PC-3 (cell line): ENCODE measurements at regions of chr4 and their contacts with region 1.

Region 1: DNA sequence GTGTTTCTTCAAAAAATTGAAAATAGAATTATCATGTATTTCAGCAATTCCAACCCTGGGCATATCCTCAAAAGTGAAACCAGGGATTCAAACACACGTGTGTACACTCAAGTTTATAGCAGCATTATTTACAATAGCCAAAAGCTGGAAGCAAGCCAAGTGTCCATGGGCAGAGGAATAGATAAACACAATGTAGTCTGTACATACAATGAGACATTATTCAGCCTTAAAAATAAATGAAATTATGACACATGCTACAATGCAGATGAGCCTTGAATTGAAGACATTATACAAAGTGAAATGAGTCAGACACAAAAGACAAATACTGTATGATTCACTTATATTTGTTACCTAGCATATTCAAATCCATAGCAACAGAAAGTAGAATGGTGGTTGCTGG is 853.4 kb downstream of the STIM2 start:
- DNase-seq: peak; percentile 88
- ATAC-seq: peak; percentile 98
- H3K4me3 ChIP-seq: no peak overlapping the region
- H3K27ac ChIP-seq: peak overlapping the region; percentile 73
- H3K4me1 ChIP-seq: peaks cover 8% of the 10 kb centered on the region
- H3K27me3 ChIP-seq: no peaks in the 10 kb centered on the region
- CTCF ChIP-seq: no peak

Region 2: GRCh38 chr4:27604692-27605091 is 109.4 kb before region 1 on chr4:
- CTCF ChIA-PET with region 1: no interaction called
- POLR2A ChIA-PET with region 1: no interaction called
- intact Hi-C with region 1: no loop called
- DNase-seq: no peak
- ATAC-seq: no peak
- H3K4me3 ChIP-seq: no peak overlapping the region
- H3K27ac ChIP-seq: no peak overlapping the region
- H3K4me1 ChIP-seq: no peaks in the 10 kb centered on the region
- H3K27me3 ChIP-seq: no peaks in the 10 kb centered on the region
- CTCF ChIP-seq: no peak

Region 3: GRCh38 chr4:27791640-27792039 is 77.6 kb after region 1 on chr4:
- CTCF ChIA-PET with region 1: no interaction called
- POLR2A ChIA-PET with region 1: no interaction called
- intact Hi-C with region 1: loop called (anchors 2 kb)
- DNase-seq: peak; percentile 80
- ATAC-seq: peak; percentile 80
- H3K4me3 ChIP-seq: no peak overlapping the region; the same call in 1 of the 2 replicates
- H3K27ac ChIP-seq: peak overlapping the region; percentile 69; the same call in 1 of the 2 replicates
- H3K4me1 ChIP-seq: peaks cover 51% of the 10 kb centered on the region
- H3K27me3 ChIP-seq: no peaks in the 10 kb centered on the region
- CTCF ChIP-seq: no peak